Left cardiac atrium (tissue), 4 donors: ENCODE measurements at regions of chr7 and their contacts with region 1.

Region 1: DNA sequence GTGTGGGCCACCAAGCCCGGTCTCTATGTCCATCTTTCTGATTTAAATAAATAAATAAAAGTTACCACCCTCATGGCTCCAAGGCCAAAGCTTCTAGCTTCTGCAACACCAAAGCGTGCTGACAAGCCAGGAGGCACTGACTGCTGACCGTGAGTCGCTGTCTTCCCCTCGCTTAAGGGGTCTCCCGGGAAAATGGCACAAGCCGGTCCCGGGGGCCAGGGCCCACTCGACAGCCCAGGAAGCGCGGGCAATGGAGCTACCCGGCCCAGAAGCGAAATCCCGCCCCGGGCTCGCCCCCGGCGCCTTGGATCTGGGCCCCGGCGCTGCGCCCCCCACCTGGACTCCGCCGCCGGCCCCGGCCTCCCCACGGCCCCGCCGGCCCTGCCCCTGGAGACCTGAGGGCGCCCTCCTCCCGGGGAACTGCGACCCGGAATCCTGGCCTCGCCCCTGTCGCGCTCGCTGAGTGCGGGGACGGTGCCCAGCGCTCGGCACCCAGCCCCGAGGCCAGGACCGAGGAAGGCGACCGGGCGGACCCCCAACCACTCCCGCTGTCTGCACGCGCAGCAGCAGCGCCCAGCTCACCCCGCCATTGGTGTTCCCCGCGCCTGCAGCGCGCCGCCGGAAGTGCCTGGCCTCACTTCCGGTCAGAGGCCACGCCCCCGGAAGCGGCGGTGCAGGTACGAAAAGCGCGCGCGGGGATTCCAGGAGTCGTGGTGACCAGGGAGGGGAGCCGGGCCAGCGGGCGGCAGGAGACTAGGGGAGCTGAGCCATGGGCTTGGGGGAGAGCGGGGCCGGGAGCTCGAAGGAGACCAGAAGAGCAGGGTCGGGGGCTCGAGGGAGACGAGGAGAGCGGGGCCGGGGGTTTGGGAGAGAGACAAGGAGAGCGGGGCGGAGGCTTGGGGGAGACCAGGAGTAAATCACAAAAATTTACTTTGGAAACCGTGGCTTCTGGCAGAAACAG is at the starts of genes MRM2 and NUDT1:
- DNase-seq: peak; percentile 87
- ATAC-seq: peak; percentile 93 to 96
- total RNA-seq, gene MRM2: 18.9 TPM
- total RNA-seq, gene NUDT1: 15.4 to 15.8 TPM

Region 2: GRCh38 chr7:2019607-2020511 is 222.0 kb before region 1 on chr7:
- intact Hi-C with region 1: no loop called
- DNase-seq: peak; percentile 84
- ATAC-seq: peak; percentile 84 to 87

Region 3: DNA sequence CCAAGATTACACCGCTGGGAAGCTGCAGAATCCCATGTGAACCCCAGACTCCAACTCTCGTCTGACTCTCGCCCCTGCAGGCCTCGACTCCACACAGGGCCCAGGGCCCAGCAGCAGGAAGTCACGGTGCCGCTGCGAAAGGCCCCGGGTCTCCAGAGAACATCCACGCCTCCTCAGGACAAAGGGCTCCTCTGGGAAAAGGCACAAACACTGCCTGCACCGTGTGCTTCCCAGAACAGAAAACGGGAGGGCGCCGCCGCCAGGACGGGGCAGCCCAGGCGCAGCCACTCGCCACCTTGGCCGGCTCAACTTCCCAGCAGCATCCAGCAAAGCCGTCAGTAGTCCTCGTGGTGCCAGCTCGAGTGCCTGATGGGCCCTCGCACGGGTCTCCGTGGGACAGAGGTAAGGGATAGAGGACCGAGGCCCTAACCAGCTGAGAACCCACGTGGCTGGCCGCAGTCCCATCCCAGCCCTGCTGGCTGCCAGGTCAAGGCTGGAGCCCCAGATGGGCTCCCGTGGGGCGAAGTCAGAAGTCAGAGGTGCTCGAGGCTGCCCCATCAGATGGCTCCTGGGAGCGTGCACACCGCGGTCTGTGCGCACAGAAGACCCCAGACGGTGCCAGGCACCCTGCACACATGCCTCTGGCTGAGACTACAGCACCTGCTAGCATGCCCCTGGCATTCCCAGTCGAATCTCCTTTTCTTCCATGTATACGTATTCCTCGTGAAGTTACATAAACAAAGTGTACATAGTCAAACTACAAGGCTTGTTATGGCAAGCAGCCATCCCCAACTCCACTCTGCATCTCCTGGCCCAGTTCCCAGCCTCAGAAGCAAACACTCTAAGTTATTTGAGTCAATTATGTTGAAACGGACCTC is 69.3 kb before region 1 on chr7:
- intact Hi-C with region 1: no loop called
- DNase-seq: no peak
- ATAC-seq: peak in 1 of 2 donors; percentile 42

Region 4: DNA sequence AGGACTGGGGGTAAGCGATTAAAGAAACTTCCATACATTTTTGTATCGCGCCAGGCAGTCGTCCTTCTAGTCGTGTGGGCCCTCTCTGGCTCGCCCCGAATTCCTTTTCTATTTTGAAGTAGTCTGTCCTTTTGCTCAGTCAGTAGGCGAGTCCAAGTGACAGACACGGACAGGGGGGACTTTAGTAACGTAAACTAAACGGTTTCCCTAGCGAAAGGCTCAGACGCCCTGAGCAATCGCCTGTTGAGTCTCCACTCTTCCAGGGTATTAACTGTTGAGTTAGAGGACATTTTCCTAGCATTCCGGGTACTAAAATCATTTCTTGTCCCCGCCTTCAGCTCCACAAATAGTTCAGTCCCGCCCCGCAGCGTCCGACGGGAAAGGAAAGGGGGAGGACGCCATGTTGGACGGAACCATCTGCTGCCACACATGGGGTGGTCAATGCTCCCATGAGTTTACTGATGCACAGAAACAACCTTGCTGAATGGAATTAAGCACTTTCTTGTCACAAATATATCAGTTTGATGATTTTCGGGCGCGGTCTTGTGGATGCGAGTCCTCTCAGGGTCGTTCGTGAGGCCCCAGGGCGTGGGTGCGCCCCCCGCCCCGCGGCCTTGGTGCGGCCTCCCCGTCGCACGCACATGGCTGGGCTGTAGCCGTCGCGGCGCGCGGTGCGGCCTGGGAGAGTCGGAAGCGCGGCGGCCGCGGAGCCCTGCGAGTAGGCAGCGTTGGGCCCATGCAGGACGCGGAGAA is 112.5 kb after region 1 on chr7 and contains the start of gene EIF3B:
- intact Hi-C with region 1: loop called (anchors 5 to 10 kb)
- DNase-seq: peak; percentile 92
- ATAC-seq: peak; percentile 95
- total RNA-seq, gene EIF3B: 59.6 to 96.1 TPM